A549 (cell line): ENCODE measurements at regions of chr3 and their contacts with region 1.

Region 1: DNA sequence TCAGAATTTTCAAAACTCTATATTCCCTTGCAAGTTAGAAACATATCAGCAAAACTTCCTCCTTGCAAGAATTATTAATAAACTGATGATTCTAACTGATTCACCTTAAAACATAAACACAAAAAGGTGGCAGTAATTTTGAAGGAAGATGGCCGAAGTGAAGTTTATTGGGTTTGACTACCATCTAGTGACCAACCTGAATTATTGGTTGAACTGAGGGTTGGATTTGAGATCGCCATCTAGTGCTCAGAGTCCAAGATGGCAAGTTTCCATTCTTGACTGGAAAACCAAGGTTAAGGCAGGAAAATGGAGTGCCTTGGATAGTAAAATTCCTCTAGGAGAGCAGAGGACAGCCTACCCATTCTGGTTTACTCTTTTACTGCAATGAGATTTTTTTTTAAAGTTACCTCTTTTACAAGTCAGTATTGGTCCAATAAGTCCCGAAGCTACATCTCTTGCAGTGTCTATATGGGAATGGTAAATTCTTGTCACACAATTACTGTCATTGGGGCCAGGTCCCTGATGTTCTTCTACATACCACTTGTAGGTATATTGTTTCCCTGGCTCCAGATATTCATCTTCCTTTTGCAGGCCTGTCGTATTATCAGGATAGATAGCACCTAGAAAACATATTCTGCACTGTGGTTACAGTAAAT is 51.6 kb upstream of the CP start:
- DNase-seq: peak; percentile 62 to 92
- ATAC-seq: peak; percentile 79 to 90
- H3K4me3 ChIP-seq: no peak overlapping the region
- H3K27ac ChIP-seq: peak overlapping the region; percentile 56 to 77
- H3K4me1 ChIP-seq: peaks cover 25% of the 10 kb centered on the region
- CTCF ChIP-seq: peak; percentile 100
- EP300 ChIP-seq: no peak
- POLR2A ChIP-seq: no peak
- RAD21 ChIP-seq: peak; percentile 100

Region 2: GRCh38 chr3:148930752-148931151 is 342.5 kb before region 1 on chr3:
- CTCF ChIA-PET with region 1: no interaction called
- POLR2A ChIA-PET with region 1: no interaction called
- DNase-seq: no peak
- ATAC-seq: peak; percentile 21 to 43; a peak in 2 of 6 replicates
- H3K4me3 ChIP-seq: no peak overlapping the region
- H3K27ac ChIP-seq: no peak overlapping the region
- H3K4me1 ChIP-seq: no peaks in the 10 kb centered on the region
- CTCF ChIP-seq: no peak
- EP300 ChIP-seq: no peak
- POLR2A ChIP-seq: no peak
- RAD21 ChIP-seq: no peak

Region 3: DNA sequence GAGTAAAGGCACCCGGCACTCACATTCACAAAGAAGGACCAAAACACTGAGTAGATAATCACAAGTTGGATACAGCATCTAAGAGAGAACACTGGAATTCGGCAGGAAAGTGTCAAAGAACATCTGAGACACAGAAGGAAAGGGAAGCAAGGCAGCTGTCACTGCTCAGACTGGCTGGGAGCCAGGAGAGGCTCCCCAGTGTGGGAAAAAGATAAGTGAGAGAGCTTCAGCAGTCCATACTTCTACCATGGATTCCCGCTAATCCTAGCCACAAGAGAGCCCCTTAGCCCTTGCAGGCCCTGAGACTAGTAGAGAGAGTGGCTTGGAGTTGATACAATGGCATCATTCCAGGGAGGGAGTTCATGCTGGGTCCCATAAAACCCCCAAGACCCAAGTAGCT is 14.9 kb before region 1 on chr3:
- CTCF ChIA-PET with region 1: interaction called, 18 read pairs
- POLR2A ChIA-PET with region 1: no interaction called
- DNase-seq: no peak
- ATAC-seq: no peak
- H3K4me3 ChIP-seq: no peak overlapping the region
- H3K27ac ChIP-seq: no peak overlapping the region
- H3K4me1 ChIP-seq: peaks cover 7% of the 10 kb centered on the region; the same call in 1 of the 3 replicates
- CTCF ChIP-seq: no peak
- EP300 ChIP-seq: no peak
- POLR2A ChIP-seq: no peak
- RAD21 ChIP-seq: no peak